ENCODE measurements at regions of chr3 and their contacts with region 1.

Region 1: DNA sequence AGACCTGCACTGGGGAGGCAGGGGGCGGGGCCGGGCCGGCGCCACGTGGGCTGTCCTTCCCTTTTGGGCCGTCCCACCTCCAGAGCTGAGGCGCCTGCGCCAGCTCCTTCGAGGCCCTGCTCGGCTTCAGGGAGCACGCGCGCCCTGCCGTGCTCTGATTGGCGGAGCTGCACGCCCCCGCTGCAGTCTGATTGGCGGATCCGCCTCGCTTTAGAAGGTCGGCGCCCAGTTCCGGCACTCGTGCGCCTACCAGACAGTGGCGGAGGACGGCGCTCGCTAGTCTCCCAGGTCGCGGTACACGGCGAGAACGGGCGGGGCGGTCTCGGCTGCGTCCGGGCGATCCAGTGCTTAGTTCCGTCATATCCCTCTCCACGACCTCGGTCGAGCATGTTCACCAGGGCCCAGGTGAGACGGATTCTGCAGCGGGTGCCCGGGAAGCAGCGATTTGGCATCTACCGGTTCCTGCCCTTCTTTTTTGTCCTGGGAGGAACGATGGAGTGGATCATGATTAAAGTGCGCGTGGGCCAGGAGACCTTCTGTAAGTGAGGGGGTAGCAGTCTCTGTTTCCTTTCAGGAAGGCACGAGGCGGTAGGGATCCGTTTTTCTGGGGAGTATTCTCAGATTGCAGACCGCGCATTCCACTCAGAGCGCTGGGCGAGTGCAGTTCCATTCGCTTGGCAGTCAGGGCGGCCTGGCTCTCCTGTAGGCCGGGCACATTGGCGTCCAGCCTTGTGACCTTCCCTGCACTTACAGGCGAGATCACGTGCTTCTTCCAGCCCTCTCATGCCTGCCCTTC is at the start of gene UQCC5:
- DNase-seq: peak; percentile 96
- H3K4me3 ChIP-seq: peak within 1 kb of the TSS; percentile 78
- H3K27ac ChIP-seq: peak within 1 kb of the TSS; percentile 79
- H3K4me1 ChIP-seq: no peaks in the 10 kb centered on the region
- H3K27me3 ChIP-seq: no peaks in the 10 kb centered on the region
- CTCF ChIP-seq: no peak
- total RNA-seq, gene UQCC5: 10.3 and 14.4 TPM in 2 replicates

Region 2: GRCh38 chr3:52339612-52340011 is 197.0 kb before region 1 on chr3:
- CTCF ChIA-PET with region 1: no interaction called
- POLR2A ChIA-PET with region 1: interaction called, 10 read pairs
- intact Hi-C with region 1: no loop called
- DNase-seq: peak; percentile 71
- H3K4me3 ChIP-seq: no peak overlapping the region
- H3K27ac ChIP-seq: no peak overlapping the region
- H3K4me1 ChIP-seq: no peaks in the 10 kb centered on the region
- H3K27me3 ChIP-seq: no peaks in the 10 kb centered on the region
- CTCF ChIP-seq: peak; percentile 60

Region 3: GRCh38 chr3:53166781-53167291 is 630.3 kb after region 1 on chr3:
- CTCF ChIA-PET with region 1: no interaction called
- POLR2A ChIA-PET with region 1: no interaction called
- intact Hi-C with region 1: no loop called
- DNase-seq: no peak
- H3K4me3 ChIP-seq: no peak overlapping the region
- H3K27ac ChIP-seq: no peak overlapping the region
- H3K4me1 ChIP-seq: no peaks in the 10 kb centered on the region
- H3K27me3 ChIP-seq: no peaks in the 10 kb centered on the region
- CTCF ChIP-seq: no peak

Measured in A673 (cell line).